H1 (cell line): ENCODE measurements at regions of chr1 and their contacts with region 1.

Region 1: GRCh38 chr1:209190591-209191261 is 392.8 kb upstream of the CAMK1G start:
- DNase-seq: peak; percentile 68 to 84
- H3K4me3 ChIP-seq: no peak overlapping the region
- H3K27ac ChIP-seq: no peak overlapping the region
- H3K4me1 ChIP-seq: peaks cover 0 to 12% (median 6%) of the 10 kb centered on the region in 4 experiments; a peak in 4 of 7 replicates
- H3K27me3 ChIP-seq: no peaks in the 10 kb centered on the region
- CTCF ChIP-seq: peak; percentile 89 to 98 (median 95)
- EP300 ChIP-seq: no peak
- POLR2A ChIP-seq: no peak
- RAD21 ChIP-seq: peak; percentile 94 to 95

Region 2: DNA sequence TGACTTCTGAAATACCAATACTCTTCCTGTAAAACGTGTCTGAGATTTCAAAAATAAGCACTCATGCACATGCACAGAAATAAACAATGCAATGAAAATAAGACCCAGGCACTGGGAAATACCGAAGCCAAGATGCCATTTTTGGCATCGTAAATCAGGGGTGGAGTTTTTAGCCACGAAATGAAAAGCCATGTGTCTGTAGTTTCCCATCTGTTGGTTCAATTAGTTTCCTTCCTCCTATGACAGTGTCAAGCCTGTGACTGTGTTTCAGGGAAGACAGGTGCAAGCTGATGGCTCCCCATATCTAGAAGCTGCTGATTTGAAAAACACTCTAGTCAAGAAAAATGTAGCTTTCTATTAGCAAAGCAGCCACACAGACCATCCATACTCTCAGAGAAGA is 87.6 kb before region 1 on chr1:
- CTCF ChIA-PET with region 1: interaction called, 12 read pairs
- POLR2A ChIA-PET with region 1: no interaction called
- DNase-seq: no peak
- H3K4me3 ChIP-seq: no peak overlapping the region
- H3K27ac ChIP-seq: no peak overlapping the region
- H3K4me1 ChIP-seq: peaks cover 2 to 11% (median 8%) of the 10 kb centered on the region in 4 experiments; a peak in 6 of 7 replicates
- H3K27me3 ChIP-seq: no peaks in the 10 kb centered on the region
- CTCF ChIP-seq: no peak
- EP300 ChIP-seq: no peak
- POLR2A ChIP-seq: no peak
- RAD21 ChIP-seq: no peak